ENCODE measurements at regions of chr10 and their contacts with region 1.

Region 1: GRCh38 chr10:22340362-22341189 is 4.7 kb upstream of the SPAG6 start:
- DNase-seq: peak; percentile 50 to 77 (median 75)
- H3K4me3 ChIP-seq: peak overlapping the region; percentile 50 to 87 (median 76)
- H3K4me3 Mint-ChIP-seq: peak overlapping the region; percentile 90 to 94
- H3K27ac ChIP-seq: peak overlapping the region; percentile 77 to 80
- H3K27ac Mint-ChIP-seq: peak overlapping the region; percentile 88 to 97 (median 95)
- H3K4me1 ChIP-seq: peaks cover 34 to 41% of the 10 kb centered on the region in 2 donors
- H3K4me1 Mint-ChIP-seq: peaks cover 42% of the 10 kb centered on the region
- H3K27me3 ChIP-seq: peaks cover 76 to 90% of the 10 kb centered on the region in 2 donors
- H3K27me3 Mint-ChIP-seq: peaks cover 82 to 93% (median 85%) of the 10 kb centered on the region in 3 donors
- CTCF ChIP-seq: no peak

Region 2: GRCh38 chr10:21516242-21517131 is 824.1 kb before region 1 on chr10:
- intact Hi-C with region 1: loop called in 1 of 2 experiments (anchors 10 kb)
- DNase-seq: peak in 2 of 3 donors; percentile 51 to 52
- H3K4me3 ChIP-seq: peak overlapping the region; percentile 44 to 79 (median 45)
- H3K4me3 Mint-ChIP-seq: peak overlapping the region; percentile 83 to 97
- H3K27ac ChIP-seq: no peak overlapping the region
- H3K27ac Mint-ChIP-seq: no peak overlapping the region
- H3K4me1 ChIP-seq: peaks cover 35 to 40% of the 10 kb centered on the region in 2 donors
- H3K4me1 Mint-ChIP-seq: peaks cover 41% of the 10 kb centered on the region
- H3K27me3 ChIP-seq: peaks cover 54 to 80% of the 10 kb centered on the region in 2 donors
- H3K27me3 Mint-ChIP-seq: peaks cover 57 to 82% (median 66%) of the 10 kb centered on the region in 3 donors
- CTCF ChIP-seq: no peak

Region 3: DNA sequence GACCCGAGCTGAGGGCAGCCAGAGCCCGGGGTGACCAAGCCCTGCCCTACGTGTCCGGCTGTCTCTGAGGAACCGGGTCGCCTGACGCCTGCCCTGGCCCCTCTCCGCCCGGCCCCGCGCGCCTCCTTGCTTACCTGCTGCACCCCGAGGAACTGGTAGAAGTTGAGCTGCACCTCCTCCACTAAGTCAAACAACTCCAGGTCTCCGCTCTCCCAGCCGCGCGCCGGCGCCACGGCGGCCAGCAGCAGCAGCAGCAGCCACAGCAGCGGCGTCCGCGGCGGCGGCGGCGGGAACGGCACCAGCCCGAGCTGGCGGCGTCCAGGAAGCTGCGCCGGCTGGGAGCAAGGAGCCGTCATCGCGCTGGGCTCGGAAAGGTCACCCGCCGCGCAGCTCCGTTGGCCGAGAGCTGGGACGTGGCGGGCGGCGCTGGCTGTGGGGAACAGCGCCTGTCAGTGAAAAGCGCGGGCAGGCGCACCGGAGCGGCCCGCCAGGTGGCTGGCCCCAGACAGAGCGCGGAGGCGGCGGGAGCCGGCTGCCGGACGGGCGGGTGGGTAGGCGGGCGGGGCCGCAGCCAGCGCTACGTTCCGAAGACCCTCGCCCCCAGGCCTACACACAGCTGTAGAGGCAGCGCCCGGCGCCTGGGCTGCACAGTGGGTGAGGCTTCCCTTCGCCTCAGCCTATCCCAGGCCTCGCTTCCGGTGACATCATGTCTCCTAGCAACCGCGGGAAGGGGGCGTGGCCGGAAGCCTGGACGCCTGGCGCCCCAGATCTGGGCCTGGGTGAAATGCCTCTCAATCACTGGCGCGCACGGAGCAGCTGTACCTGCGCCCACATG is 337.3 kb before region 1 on chr10 and contains the start of gene DNAJC1:
- intact Hi-C with region 1: loop called in 1 of 2 experiments (anchors 10 kb)
- DNase-seq: peak; percentile 92 to 95 (median 93)
- H3K4me3 ChIP-seq: peak within 1 kb of the TSS; percentile 56 to 90 (median 83)
- H3K4me3 Mint-ChIP-seq: peak within 1 kb of the TSS; percentile 92 to 99
- H3K27ac ChIP-seq: peak within 1 kb of the TSS; percentile 85 to 87
- H3K27ac Mint-ChIP-seq: peak within 1 kb of the TSS; percentile 85 to 94 (median 92)
- H3K4me1 ChIP-seq: peaks cover 17 to 24% of the 10 kb centered on the region in 2 donors
- H3K4me1 Mint-ChIP-seq: peaks cover 31% of the 10 kb centered on the region
- H3K27me3 ChIP-seq: no peaks in the 10 kb centered on the region
- H3K27me3 Mint-ChIP-seq: peaks cover 0 to 1% (median 0%) of the 10 kb centered on the region in 3 donors
- CTCF ChIP-seq: peak; percentile 15
- polyA plus RNA-seq, gene DNAJC1: 11.4 to 12.9 (median 12.5) TPM

Region 4: DNA sequence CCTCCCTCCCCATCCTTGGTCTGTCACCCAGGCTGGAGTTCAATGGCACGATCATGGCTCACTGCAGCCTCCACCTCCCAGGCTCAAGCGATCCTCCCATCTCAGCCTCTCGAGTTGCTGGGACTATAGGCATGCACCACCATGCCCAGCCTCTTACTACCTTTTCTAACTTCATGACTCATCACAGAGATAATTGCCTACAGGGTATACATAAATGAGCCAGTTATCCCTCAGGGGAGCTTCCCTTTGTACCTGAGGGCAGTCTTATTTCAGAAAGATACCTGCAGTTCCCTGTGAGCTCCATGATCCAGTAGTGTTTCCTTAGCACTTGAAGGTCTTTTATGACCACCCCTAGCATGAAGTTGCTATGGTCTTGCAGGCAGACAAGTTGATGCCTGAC is 242.9 kb before region 1 on chr10:
- intact Hi-C with region 1: no loop called
- DNase-seq: no peak
- H3K4me3 ChIP-seq: no peak overlapping the region
- H3K4me3 Mint-ChIP-seq: no peak overlapping the region
- H3K27ac ChIP-seq: no peak overlapping the region
- H3K27ac Mint-ChIP-seq: no peak overlapping the region
- H3K4me1 ChIP-seq: no peaks in the 10 kb centered on the region
- H3K4me1 Mint-ChIP-seq: peaks cover 2% of the 10 kb centered on the region
- H3K27me3 ChIP-seq: no peaks in the 10 kb centered on the region
- H3K27me3 Mint-ChIP-seq: no peaks in the 10 kb centered on the region
- CTCF ChIP-seq: no peak

Region 5: DNA sequence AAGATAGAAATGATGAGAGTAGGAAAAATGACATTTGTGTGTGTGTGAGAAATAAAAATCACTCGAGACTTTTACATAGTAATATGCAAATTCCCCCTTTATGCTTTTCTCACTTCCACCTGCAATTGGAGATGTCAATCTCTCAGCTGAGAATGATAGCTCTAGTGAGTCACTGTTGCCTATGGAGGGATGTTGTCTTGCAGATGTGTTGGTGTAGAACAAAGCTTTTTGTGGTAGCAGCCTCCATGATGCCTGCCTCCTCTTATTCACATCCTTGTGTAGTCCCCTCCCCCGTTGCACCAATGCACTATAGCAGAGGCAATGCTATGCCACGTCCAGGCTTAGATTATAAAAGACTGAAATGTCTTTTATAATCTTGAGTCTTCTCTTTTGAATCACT is 38.5 kb after region 1 on chr10:
- intact Hi-C with region 1: no loop called
- DNase-seq: no peak
- H3K4me3 ChIP-seq: no peak overlapping the region
- H3K4me3 Mint-ChIP-seq: no peak overlapping the region
- H3K27ac ChIP-seq: no peak overlapping the region
- H3K27ac Mint-ChIP-seq: no peak overlapping the region
- H3K4me1 ChIP-seq: no peaks in the 10 kb centered on the region
- H3K4me1 Mint-ChIP-seq: peaks cover 5% of the 10 kb centered on the region
- H3K27me3 ChIP-seq: no peaks in the 10 kb centered on the region
- H3K27me3 Mint-ChIP-seq: peaks cover 0 to 1% (median 0%) of the 10 kb centered on the region in 3 donors
- CTCF ChIP-seq: no peak

Region 6: GRCh38 chr10:23870651-23871610 is 1530.4 kb after region 1 on chr10:
- intact Hi-C with region 1: no loop called
- DNase-seq: no peak
- H3K4me3 ChIP-seq: no peak overlapping the region
- H3K4me3 Mint-ChIP-seq: peak overlapping the region in 1 of 2 donors; percentile 36
- H3K27ac ChIP-seq: no peak overlapping the region
- H3K27ac Mint-ChIP-seq: no peak overlapping the region
- H3K4me1 ChIP-seq: peaks cover 4 to 10% of the 10 kb centered on the region in 2 donors
- H3K4me1 Mint-ChIP-seq: peaks cover 22% of the 10 kb centered on the region
- H3K27me3 ChIP-seq: no peaks in the 10 kb centered on the region
- H3K27me3 Mint-ChIP-seq: peaks cover 0 to 2% (median 0%) of the 10 kb centered on the region in 3 donors
- CTCF ChIP-seq: no peak

Measured in CD14-positive monocyte (primary cell).